Activated naive CD4-positive, alpha-beta T cell treated with anti-CD3 and anti-CD28 coated beads for 36 hours (primary cell): ENCODE measurements at regions of chr1 and their contacts with region 1.

Region 1: DNA sequence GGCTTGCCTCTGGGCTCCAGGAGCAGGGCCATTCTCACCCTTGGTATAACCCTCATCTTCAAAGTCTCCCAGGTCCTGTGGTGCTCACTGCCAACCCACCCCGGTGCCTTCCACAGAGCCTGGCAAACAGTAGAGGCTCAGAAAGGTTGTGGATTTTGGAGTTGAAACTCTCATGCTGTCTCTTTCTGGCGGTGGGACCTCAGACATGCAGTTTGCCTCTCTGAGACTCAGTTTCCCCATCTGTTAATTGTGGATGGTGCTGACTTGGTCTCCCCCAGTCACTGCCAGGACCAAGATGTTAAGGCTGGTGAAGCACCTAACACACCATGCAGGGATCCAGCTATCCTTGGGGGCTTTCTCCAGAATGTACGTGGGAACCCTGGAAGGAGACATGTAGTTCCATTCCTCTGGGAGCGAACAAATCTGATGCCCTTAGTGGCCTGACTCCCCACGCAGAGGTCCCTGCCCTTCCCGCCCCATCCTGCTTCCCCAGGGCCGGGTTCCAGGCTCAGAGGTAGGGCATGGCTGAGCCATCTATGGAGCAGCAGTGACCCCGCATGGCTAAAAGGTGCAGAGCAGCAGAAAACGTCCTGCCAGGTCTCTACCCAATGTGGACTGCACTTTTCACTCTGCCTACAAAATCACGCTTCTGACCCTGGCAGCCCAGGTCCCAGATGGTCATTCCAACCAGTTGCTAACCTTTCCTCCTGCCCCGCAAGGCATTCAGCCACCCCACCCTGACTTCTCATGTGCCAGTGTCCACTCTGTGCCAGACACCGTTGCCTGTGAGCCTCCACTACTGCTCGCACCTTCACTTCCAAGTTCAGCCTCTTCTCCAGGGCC is 9.2 kb upstream of the TTC22 start:
- DNase-seq: peak; percentile 82
- H3K4me3 Mint-ChIP-seq: no peak overlapping the region
- H3K27ac Mint-ChIP-seq: no peak overlapping the region
- H3K4me1 Mint-ChIP-seq: no peaks in the 10 kb centered on the region
- H3K27me3 Mint-ChIP-seq: no peaks in the 10 kb centered on the region

Region 2: DNA sequence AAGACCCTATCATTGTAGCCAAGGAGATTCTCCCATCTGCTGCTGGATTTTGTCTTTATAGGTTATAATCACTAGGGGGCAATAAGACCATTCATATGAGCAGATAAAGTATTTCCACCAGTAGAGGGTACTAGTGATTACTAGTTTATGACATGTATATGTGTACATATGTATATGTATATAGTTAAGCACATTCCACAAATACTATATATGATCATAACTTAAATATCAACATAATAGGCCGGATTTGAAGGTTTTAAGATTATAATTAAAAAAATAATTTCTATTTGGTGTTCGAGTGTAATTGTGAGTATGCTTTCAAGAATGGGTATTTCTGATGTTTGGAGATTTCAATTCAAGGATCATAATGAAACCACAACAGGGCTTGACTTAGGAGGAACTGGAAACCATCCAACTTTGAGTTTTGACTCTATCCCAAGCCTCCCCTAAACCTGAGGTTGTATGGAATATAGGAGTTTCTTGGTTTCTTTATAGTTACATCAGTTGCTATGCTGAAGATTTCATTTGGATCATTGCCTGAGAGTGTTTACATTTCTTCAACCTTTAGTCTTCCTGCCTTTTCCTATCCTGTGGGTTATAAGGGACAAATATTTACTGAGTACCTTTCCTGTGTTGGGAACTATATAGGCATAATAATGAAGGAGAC is 740.0 kb before region 1 on chr1:
- CTCF ChIA-PET with region 1: no interaction called
- intact Hi-C with region 1: loop called (anchors 1 kb)
- DNase-seq: no peak
- H3K4me3 Mint-ChIP-seq: no peak overlapping the region
- H3K27ac Mint-ChIP-seq: no peak overlapping the region
- H3K4me1 Mint-ChIP-seq: no peaks in the 10 kb centered on the region
- H3K27me3 Mint-ChIP-seq: no peaks in the 10 kb centered on the region

Region 3: GRCh38 chr1:54499360-54500106 is 310.8 kb before region 1 on chr1:
- CTCF ChIA-PET with region 1: interaction called, 7 read pairs
- intact Hi-C with region 1: loop called (anchors 1 kb)
- DNase-seq: peak; percentile 60
- H3K4me3 Mint-ChIP-seq: peak overlapping the region; percentile 63
- H3K27ac Mint-ChIP-seq: no peak overlapping the region
- H3K4me1 Mint-ChIP-seq: peaks cover 8% of the 10 kb centered on the region
- H3K27me3 Mint-ChIP-seq: peaks cover 13% of the 10 kb centered on the region

Region 4: DNA sequence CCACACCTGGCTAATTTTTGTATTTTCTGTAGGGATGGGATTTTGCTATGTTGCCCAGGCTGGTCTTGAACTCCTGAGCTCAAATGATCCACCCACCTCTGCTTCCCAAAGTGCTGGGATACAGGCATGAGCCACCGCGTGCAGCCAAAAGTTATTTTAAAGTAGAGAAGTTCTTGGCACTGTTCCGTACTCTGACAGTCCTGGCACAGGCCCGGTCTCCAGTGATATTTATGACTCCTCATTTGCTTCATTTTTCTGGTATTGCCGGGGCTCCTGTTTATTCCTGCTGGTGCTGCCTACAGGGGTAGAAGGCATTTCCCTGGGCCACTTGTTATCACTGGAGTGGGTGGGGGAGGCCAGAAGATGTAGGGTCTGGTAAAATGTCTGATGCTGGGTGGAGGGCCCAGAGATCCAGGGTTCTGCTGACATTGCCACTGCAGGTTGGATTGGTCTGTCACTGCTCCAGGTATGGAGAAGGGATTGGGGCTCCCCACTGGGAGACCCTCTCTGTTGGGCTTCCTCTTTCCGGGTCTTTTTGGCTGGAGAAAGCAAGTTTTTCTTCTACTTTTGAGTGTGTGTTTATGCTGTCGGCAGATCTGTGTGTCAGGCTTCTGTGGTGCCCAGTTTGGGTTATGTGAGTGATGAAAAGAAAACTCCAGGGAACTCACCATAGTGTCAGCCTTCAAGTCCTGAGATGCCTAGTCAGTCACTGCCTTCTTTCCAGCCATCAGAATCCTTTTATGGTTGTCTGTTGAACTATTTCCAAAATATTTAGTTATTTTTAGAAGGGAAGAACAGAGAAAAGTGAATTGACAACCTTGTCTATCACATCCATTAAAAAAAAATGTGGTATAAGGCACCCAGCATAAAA is 164.3 kb before region 1 on chr1:
- CTCF ChIA-PET with region 1: no interaction called
- intact Hi-C with region 1: no loop called
- DNase-seq: no peak
- H3K4me3 Mint-ChIP-seq: no peak overlapping the region
- H3K27ac Mint-ChIP-seq: no peak overlapping the region
- H3K4me1 Mint-ChIP-seq: no peaks in the 10 kb centered on the region
- H3K27me3 Mint-ChIP-seq: no peaks in the 10 kb centered on the region

Region 5: GRCh38 chr1:54671985-54672608 is 138.2 kb before region 1 on chr1:
- CTCF ChIA-PET with region 1: interaction called, 15 read pairs
- intact Hi-C with region 1: loop called (anchors 1 kb)
- DNase-seq: peak; percentile 84
- H3K4me3 Mint-ChIP-seq: no peak overlapping the region
- H3K27ac Mint-ChIP-seq: no peak overlapping the region
- H3K4me1 Mint-ChIP-seq: no peaks in the 10 kb centered on the region
- H3K27me3 Mint-ChIP-seq: no peaks in the 10 kb centered on the region

Region 6: GRCh38 chr1:54764133-54764921 is 46.0 kb before region 1 on chr1 and contains the start of gene PARS2:
- CTCF ChIA-PET with region 1: interaction called, 6 read pairs
- intact Hi-C with region 1: loop called (anchors 1 kb)
- DNase-seq: peak; percentile 96
- H3K4me3 Mint-ChIP-seq: peak within 1 kb of the TSS; percentile 94
- H3K27ac Mint-ChIP-seq: peak within 1 kb of the TSS; percentile 83
- H3K4me1 Mint-ChIP-seq: peaks cover 19% of the 10 kb centered on the region
- H3K27me3 Mint-ChIP-seq: no peaks in the 10 kb centered on the region
- total RNA-seq, gene PARS2: 3.0 to 3.1 TPM

Region 7: GRCh38 chr1:54886724-54887664 is 76.7 kb after region 1 on chr1 and contains the start of gene DHCR24:
- CTCF ChIA-PET with region 1: no interaction called
- intact Hi-C with region 1: no loop called
- DNase-seq: peak; percentile 75
- H3K4me3 Mint-ChIP-seq: peak within 1 kb of the TSS; percentile 93
- H3K27ac Mint-ChIP-seq: peak within 1 kb of the TSS; percentile 80
- H3K4me1 Mint-ChIP-seq: peaks cover 31% of the 10 kb centered on the region
- H3K27me3 Mint-ChIP-seq: peaks cover 11% of the 10 kb centered on the region
- total RNA-seq, gene DHCR24: 56.3 to 64.8 TPM

Region 8: GRCh38 chr1:55007625-55008024 is 197.3 kb after region 1 on chr1:
- CTCF ChIA-PET with region 1: no interaction called
- intact Hi-C with region 1: no loop called
- DNase-seq: no peak
- H3K4me3 Mint-ChIP-seq: no peak overlapping the region
- H3K27ac Mint-ChIP-seq: no peak overlapping the region
- H3K4me1 Mint-ChIP-seq: no peaks in the 10 kb centered on the region
- H3K27me3 Mint-ChIP-seq: no peaks in the 10 kb centered on the region